ENCODE measurements at regions of chr2 and their contacts with region 1.

Region 1: DNA sequence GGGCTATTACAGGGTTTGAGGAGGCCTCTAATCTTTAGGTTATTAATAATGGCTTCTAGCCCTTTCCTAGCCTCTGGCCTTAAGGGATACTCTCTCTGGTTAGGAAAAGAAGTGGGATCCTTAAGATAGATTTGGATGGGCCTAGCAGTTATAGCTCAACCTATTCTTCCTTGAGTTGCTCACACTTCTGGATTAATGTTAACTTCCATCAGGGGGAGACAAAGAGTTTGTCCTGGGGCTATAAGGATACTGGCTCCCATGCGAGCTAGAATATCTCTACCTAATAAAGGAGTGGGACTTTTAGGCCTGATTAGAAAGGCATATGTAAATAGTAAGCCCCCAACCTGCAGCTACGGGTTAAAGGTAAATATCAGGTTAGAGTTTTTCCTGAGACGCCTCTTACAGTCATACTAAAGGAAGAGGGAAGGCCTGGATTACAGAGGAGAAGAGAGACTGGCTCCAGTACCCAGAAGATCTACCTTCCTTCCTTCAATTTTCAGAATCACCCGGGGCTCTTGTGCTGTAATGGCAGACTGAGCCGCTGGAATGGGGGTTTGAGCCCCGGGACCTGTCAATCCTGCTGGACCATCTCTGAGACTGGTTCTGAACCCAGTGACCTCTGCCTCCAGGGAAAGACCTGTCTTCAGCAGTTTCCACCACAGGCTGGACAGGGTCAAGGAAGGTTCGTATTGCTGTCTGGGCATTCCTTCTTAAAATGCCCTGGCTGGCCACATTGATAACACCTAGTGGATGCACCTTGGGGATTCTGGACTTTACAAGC is 14.1 kb upstream of the PTH2R start:
- DNase-seq: no peak
- H3K4me3 ChIP-seq: no peak overlapping the region
- H3K27ac ChIP-seq: no peak overlapping the region
- H3K4me1 ChIP-seq: no peaks in the 10 kb centered on the region
- H3K27me3 ChIP-seq: no peaks in the 10 kb centered on the region
- CTCF ChIP-seq: peak in 1 of 3 experiments; percentile 22; a peak in 1 of 4 replicates
- EP300 ChIP-seq: no peak
- POLR2A ChIP-seq: no peak
- RAD21 ChIP-seq: no peak

Region 2: DNA sequence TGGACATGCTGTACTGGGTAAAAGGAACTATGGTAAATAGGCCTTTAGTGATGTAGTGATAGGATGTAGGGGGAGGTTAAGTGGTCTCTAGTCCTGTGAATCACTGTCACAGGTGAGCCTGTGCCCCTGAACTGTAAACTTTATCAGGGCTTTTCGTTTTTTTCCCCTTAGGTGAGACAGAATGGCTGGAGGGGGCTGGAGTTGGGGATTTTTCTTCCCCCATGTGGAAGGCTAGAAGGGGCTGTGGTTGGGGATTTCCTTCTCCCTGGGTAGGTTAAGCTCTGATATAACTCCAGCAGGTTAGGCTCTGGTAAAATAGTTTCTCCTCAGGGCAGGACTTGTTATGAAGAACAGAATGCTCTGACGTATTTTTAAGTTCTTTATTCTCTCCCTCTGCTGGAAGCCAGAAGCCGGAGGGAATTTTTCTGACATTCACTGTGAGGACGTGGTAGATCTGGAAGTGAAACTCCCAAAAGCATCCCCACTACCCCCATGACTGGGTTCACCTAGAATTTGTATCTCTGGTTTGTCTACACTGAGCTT is 97.9 kb before region 1 on chr2:
- CTCF ChIA-PET with region 1: no interaction called
- POLR2A ChIA-PET with region 1: no interaction called
- DNase-seq: no peak
- H3K4me3 ChIP-seq: no peak overlapping the region
- H3K27ac ChIP-seq: no peak overlapping the region
- H3K4me1 ChIP-seq: no peaks in the 10 kb centered on the region
- H3K27me3 ChIP-seq: no peaks in the 10 kb centered on the region
- CTCF ChIP-seq: no peak
- EP300 ChIP-seq: no peak
- POLR2A ChIP-seq: no peak
- RAD21 ChIP-seq: no peak

Region 3: DNA sequence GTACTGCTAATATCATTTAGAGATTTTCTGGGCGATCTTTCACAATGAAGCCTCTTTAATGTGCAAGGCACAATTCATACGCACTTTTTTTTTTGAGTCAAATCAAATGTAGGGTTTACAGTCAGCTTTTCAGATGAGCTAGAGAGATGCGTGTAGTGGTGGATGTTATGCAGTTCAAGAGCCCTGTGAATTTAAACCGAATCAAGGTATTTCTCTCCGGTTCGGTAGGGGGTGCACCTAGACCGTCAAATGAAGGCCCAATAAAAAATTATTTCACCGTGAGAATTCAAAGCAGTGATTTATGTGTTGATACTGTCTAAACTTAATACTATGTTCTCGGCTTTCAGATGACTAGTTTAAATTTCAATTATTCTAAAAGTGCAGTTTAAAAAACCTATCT is 15.2 kb after region 1 on chr2:
- CTCF ChIA-PET with region 1: interaction called, 12 read pairs
- POLR2A ChIA-PET with region 1: no interaction called
- DNase-seq: no peak
- H3K4me3 ChIP-seq: peak overlapping the region in 1 of 4 experiments; percentile 55; a peak in 2 of 8 replicates
- H3K27ac ChIP-seq: no peak overlapping the region
- H3K4me1 ChIP-seq: peaks cover 0 to 5% (median 4%) of the 10 kb centered on the region in 4 experiments; a peak in 3 of 7 replicates
- H3K27me3 ChIP-seq: peaks cover 5 to 26% (median 18%) of the 10 kb centered on the region in 4 experiments
- CTCF ChIP-seq: peak in 2 of 3 experiments; percentile 55 to 60; a peak in 3 of 4 replicates
- EP300 ChIP-seq: no peak
- POLR2A ChIP-seq: no peak
- RAD21 ChIP-seq: peak; percentile 88 to 89